Right cardiac atrium (tissue), 5 donors: ENCODE measurements at regions of chr9 and their contacts with region 1.

Region 1: DNA sequence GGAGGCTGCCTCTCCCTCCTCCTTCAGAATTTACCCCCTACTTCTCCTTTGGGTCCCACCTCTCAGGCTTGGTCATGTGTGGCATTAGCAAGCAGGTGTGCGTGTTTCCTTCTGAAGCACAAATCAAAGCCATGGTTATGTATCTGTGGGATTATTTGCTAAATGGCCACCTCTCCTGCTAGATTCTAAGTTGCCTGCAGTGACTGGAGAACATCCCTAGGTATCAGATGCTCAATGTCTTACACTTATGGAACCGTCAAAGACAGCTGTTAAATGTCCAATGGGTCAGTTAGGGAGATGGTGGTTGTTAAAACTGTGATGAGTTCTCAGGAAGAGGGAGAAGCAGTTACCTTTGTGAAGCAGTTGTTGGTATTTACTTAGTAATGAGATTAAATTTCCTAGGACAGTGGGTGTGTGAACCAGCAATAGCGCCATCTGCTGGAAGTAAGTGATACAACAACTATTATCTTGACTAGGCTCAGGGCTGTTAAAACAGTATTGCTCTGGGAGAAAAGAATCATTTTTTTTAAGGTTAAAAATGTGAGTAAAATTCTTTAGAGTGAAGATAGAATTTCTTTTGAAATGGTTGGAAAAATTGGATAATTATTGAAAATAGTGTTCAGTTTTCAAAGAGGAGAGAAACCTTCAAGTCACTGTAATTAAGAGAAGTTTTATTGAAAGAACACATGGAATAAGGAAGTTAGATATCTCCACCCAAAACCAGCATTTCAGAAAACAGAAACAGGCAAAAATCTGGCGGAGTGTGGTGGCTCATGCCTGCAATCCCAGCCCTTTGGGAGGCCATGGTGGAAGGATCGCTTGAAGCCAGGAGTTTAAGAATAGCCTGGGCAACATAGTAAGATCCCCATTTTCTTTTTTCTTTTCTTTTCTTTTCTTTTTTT is 71.3 kb downstream of the TMC1 start:
- DNase-seq: peak in 1 of 3 donors; percentile 53
- ATAC-seq: peak; percentile 82 to 86
- H3K4me3 ChIP-seq: no peak overlapping the region
- H3K27ac ChIP-seq: no peak overlapping the region
- H3K4me1 ChIP-seq: no peaks in the 10 kb centered on the region
- H3K27me3 ChIP-seq: no peaks in the 10 kb centered on the region

Region 2: GRCh38 chr9:72280913-72281500 is 311.7 kb before region 1 on chr9:
- intact Hi-C with region 1: loop called in 1 of 4 experiments (anchors 5 kb)
- DNase-seq: peak; percentile 66 to 84 (median 81)
- ATAC-seq: peak; percentile 86 to 88
- H3K4me3 ChIP-seq: no peak overlapping the region
- H3K27ac ChIP-seq: no peak overlapping the region
- H3K4me1 ChIP-seq: no peaks in the 10 kb centered on the region
- H3K27me3 ChIP-seq: no peaks in the 10 kb centered on the region

Region 3: DNA sequence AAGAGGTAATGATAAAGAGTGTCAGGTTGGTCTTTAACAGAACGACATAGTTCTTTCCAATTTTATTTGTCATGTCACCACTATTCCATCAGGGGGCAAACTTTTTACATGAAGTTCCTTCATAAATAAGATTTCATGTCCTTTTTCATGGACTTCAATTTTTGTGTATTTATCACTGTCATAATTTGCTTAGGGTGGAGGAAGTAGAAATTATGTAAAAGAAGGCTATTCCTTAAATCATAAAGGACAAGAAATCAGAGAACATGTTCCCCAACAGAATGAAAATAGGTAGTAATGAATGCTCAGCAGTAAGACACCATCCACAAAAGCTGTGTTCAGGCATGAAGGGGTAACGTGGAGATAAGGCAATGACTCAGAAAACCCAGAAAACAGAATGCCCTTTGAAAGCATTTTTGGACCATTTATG is 300.5 kb before region 1 on chr9:
- intact Hi-C with region 1: loop called in 3 of 4 experiments (anchors 2 to 5 kb)
- DNase-seq: no peak
- ATAC-seq: peak; percentile 41 to 48
- H3K4me3 ChIP-seq: no peak overlapping the region
- H3K27ac ChIP-seq: no peak overlapping the region
- H3K4me1 ChIP-seq: no peaks in the 10 kb centered on the region
- H3K27me3 ChIP-seq: no peaks in the 10 kb centered on the region

Region 4: DNA sequence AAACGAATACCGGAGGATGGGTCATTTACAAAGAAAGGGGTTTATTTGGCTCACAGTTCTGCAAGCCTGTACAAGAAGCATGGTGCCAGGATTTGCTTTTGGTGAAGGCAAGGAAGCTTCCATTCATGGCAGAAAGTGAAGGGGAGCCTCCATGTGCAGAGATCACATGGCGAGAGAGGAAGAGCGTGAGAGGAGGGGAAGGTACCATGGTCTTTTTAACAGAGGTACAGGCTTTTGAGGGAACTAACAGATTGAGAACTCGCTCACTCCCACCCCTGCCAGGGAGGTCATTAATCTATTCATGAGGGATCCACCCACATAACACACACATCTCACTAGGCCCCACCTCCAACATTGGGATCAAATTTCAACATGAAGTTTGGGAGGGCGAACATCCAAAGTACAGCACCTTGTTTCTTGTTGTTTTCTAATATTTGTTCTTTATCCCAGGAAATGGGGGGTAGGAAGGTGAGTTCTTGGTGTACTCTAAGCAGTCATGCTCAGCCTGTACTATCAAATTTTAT is 52.9 kb before region 1 on chr9:
- intact Hi-C with region 1: loop called in 1 of 4 experiments (anchors 10 kb)
- DNase-seq: no peak
- ATAC-seq: no peak
- H3K4me3 ChIP-seq: no peak overlapping the region
- H3K27ac ChIP-seq: no peak overlapping the region
- H3K4me1 ChIP-seq: no peaks in the 10 kb centered on the region
- H3K27me3 ChIP-seq: no peaks in the 10 kb centered on the region